Activated CD4-positive, alpha-beta T cell treated with anti-CD3 and anti-CD28 coated beads, Interleukin-2, amount 10 ng/mL, durations not matched to agents 24 days and 14 days (primary cell): ENCODE measurements at regions of chr21 and their contacts with region 1.

Region 1: GRCh38 chr21:15729674-15730483 is at the start of gene USP25:
- DNase-seq: peak; percentile 94
- H3K4me3 Mint-ChIP-seq: peak within 1 kb of the TSS; percentile 94
- H3K27ac Mint-ChIP-seq: peak within 1 kb of the TSS; percentile 92
- H3K4me1 Mint-ChIP-seq: peaks cover 12% of the 10 kb centered on the region
- H3K27me3 Mint-ChIP-seq: peaks cover 21% of the 10 kb centered on the region
- total RNA-seq, gene USP25: 27.3 and 29.0 TPM in 2 replicates

Region 2: DNA sequence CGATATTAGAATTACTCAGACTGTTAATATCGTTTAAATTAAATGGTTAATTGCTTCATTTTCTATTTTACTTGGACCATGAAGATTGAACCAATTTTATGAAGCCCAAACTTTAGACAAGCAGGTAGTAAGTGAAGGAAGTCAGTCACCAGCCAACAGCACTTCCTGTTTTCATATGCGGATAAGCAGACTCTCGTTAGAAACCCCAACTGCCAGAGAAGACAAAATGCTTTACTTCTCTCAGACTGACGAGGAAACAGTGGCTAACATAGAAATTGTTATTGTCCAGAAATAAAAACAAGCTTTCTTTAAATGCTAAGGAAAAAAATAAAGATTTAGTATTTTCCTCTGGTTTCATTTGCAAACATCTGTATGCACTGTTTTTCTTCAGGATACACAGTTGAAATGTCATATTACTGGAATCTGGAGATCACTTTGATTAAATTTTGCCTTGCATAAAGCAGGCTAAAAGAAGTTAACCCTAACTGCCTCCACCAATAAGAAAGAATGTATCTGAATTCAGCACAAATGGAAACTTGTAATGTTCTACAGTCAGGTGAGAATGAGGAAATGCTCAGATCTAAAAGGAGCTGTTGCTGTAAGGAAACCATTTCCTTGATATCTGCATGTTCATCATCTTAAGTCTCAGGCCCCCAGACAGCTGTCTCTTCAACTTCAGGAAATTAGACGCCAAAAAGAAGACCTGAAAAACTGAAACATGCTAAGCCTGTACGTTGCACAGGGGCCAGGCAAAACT is 1053.9 kb before region 1 on chr21:
- intact Hi-C with region 1: loop called (anchors 5 kb)
- DNase-seq: peak; percentile 75
- H3K4me3 Mint-ChIP-seq: peak overlapping the region; percentile 74
- H3K27ac Mint-ChIP-seq: peak overlapping the region; percentile 93
- H3K4me1 Mint-ChIP-seq: peaks cover 38% of the 10 kb centered on the region
- H3K27me3 Mint-ChIP-seq: no peaks in the 10 kb centered on the region

Region 3: GRCh38 chr21:15768045-15768601 is 38.2 kb after region 1 on chr21:
- intact Hi-C with region 1: loop called (anchors 5 kb)
- DNase-seq: no peak
- H3K4me3 Mint-ChIP-seq: no peak overlapping the region
- H3K27ac Mint-ChIP-seq: no peak overlapping the region
- H3K4me1 Mint-ChIP-seq: peaks cover 19% of the 10 kb centered on the region
- H3K27me3 Mint-ChIP-seq: no peaks in the 10 kb centered on the region

Region 4: DNA sequence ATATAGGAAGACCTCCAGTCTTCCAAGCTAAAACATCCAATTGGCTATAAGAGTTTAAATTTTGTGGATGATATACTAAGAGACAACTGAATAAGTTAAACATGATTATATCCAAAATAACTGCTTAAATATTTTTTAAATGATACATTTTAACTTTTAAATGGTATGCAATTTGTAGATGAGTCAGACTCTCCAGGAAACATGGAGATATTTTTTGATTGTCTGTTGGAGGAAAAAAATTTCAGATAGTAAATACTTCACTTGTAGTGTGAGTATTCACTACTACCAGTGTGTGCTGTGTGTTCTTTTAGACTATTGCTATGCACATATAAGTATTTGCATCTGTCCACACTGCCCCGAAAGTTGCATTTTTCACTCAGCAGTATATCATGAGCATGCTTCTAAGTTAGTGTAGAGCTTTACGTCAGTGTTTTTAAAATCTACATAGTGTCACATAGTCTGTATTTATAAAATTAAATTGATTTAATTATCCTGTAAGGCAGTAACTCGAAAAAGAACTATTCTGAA is 91.0 kb after region 1 on chr21:
- intact Hi-C with region 1: loop called (anchors 2 kb)
- DNase-seq: no peak
- H3K4me3 Mint-ChIP-seq: no peak overlapping the region
- H3K27ac Mint-ChIP-seq: no peak overlapping the region
- H3K4me1 Mint-ChIP-seq: peaks cover 17% of the 10 kb centered on the region
- H3K27me3 Mint-ChIP-seq: no peaks in the 10 kb centered on the region

Region 5: DNA sequence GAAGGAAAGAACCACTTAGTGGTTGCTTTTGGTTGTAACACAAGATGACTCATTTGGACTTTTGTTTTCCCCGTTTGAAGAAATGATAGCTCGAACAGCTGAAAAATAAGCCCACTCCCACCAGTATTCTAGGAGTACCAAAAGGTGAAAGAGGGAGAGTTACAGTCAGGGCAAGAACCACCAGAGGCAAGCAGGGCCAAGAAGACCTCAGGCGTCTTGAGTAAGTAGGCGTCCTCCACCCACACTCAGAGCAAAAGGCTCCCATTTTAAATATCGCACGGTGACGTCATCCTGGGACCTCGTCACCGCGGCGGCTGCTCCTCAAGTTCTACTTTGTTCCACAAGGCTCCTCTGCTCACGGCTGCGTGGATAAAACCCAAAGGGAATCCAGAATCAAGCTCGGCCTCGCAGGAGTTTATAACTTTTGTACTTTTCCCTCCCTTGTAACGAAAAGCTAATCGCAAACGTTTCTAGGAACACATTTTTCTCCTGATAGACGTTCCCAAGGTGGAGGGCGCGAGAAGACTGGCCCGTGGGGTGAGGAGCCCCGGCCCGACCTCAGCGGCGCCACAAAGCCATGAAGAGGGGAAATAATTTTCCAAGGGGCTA is 1881.6 kb after region 1 on chr21:
- intact Hi-C with region 1: loop called (anchors 5 kb)
- DNase-seq: peak; percentile 94
- H3K4me3 Mint-ChIP-seq: peak overlapping the region; percentile 84
- H3K27ac Mint-ChIP-seq: peak overlapping the region; percentile 96
- H3K4me1 Mint-ChIP-seq: peaks cover 46% of the 10 kb centered on the region
- H3K27me3 Mint-ChIP-seq: no peaks in the 10 kb centered on the region